K562 (cell line): ENCODE measurements at regions of chr1 and their contacts with region 1.

Region 1: GRCh38 chr1:26321315-26322041 is 3.7 kb downstream of the CD52 start:
- DNase-seq: peak; percentile 89 to 94 (median 90)
- ATAC-seq: peak; percentile 87
- H3K4me3 ChIP-seq: no peak overlapping the region
- H3K27ac ChIP-seq: no peak overlapping the region
- H3K4me1 ChIP-seq: peaks cover 39 to 52% of the 10 kb centered on the region in 2 experiments
- H3K27me3 ChIP-seq: no peaks in the 10 kb centered on the region
- CTCF ChIP-seq: peak; percentile 96 to 98 (median 97)
- EP300 ChIP-seq: peak; percentile 21; the same call in 1 of the 2 replicates
- POLR2A ChIP-seq: no peak
- RAD21 ChIP-seq: peak; percentile 99

Region 2: GRCh38 chr1:26111530-26112406 is 209.7 kb before region 1 on chr1 and contains the start of gene PDIK1L:
- CTCF ChIA-PET with region 1: interaction called, 7 read pairs
- POLR2A ChIA-PET with region 1: interaction called, 3 read pairs
- in situ Hi-C with region 1: no loop called
- intact Hi-C with region 1: loop called (anchors 5 kb)
- DNase-seq: peak; percentile 90 to 98 (median 94)
- ATAC-seq: peak; percentile 85
- H3K4me3 ChIP-seq: peak within 1 kb of the TSS; percentile 94
- H3K27ac ChIP-seq: peak within 1 kb of the TSS; percentile 92
- H3K4me1 ChIP-seq: peaks cover 13 to 29% of the 10 kb centered on the region in 2 experiments
- H3K27me3 ChIP-seq: no peaks in the 10 kb centered on the region
- CTCF ChIP-seq: 0 out of 6 replicates have a peak, but pooled peaks of 2 of the 3 experiments have one; percentile 4 to 10
- EP300 ChIP-seq: no peak; the same call in 1 of the 2 replicates
- POLR2A ChIP-seq: peak; percentile 84
- RAD21 ChIP-seq: peak in 1 of 2 experiments; percentile 14; a peak in 1 of 4 replicates
- polyA plus RNA-seq, gene PDIK1L: 14.7 to 21.5 TPM

Region 3: GRCh38 chr1:26279456-26280332 is 41.8 kb before region 1 on chr1 and contains the start of gene SH3BGRL3:
- CTCF ChIA-PET with region 1: interaction called, 31 read pairs
- POLR2A ChIA-PET with region 1: interaction called, 12 read pairs
- in situ Hi-C with region 1: no loop called
- intact Hi-C with region 1: loop called (anchors 1 kb)
- DNase-seq: peak; percentile 93 to 96 (median 96)
- ATAC-seq: peak; percentile 87
- H3K4me3 ChIP-seq: peak within 1 kb of the TSS; percentile 47
- H3K27ac ChIP-seq: peak within 1 kb of the TSS; percentile 81
- H3K4me1 ChIP-seq: peaks cover 81 to 83% of the 10 kb centered on the region in 2 experiments
- H3K27me3 ChIP-seq: no peaks in the 10 kb centered on the region
- CTCF ChIP-seq: peak; percentile 66 to 83 (median 69)
- EP300 ChIP-seq: peak; percentile 13; the same call in 1 of the 2 replicates
- POLR2A ChIP-seq: peak; percentile 84
- RAD21 ChIP-seq: peak; percentile 35 to 40; a peak in 2 of 4 replicates
- polyA plus RNA-seq, gene SH3BGRL3: 106 to 137 TPM

Region 4: DNA sequence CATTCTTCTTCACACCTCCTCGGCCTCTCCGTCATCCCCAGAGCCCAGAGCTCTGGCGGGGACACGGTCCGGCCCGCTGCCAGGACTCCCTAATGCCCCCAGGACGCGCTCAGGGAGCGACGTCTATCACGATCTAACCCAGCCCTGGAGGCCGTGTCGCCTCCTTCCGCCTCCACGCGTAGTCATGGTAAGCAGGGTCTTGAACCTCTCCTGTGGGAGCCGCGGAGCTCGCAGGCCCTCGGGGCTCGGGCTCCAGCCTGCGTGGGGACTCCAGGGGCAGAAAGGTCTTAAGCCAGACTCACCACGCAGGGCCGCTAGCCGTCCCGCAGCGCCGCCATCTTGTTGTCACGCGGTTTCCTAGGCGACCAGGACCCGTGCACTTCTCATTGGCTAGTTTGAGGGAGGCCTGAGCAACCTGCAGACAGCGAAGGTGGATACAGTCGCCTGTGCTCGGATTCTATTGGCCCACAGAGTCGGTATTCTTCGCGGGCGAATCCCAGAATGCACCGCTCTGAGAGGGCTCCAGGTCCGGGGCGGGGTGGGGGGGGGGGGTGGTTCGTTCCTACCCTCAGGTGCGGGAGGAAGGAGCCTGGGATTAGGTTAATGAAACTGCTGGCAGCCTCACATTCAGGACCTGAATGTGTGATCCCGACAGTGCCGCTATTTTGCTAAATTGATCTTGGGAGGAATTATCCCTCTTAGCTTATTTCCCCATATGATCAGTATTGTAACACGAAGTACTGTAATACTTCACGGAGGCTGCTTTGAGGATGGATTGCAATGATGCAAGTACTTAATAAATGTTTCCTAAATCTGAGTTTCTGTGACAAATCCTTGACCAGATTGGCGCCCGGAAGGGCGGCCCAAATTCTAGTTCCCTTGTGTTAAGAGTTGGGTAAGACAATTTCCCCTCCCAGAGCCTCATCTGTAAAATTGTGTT is 14.9 kb before region 1 on chr1 and contains the start of gene UBXN11:
- CTCF ChIA-PET with region 1: no interaction called
- POLR2A ChIA-PET with region 1: interaction called, 13 read pairs
- in situ Hi-C with region 1: no loop called
- intact Hi-C with region 1: no loop called
- DNase-seq: peak; percentile 99 to 100 (median 99)
- ATAC-seq: peak; percentile 99
- H3K4me3 ChIP-seq: peak within 1 kb of the TSS; percentile 77
- H3K27ac ChIP-seq: peak within 1 kb of the TSS; percentile 77
- H3K4me1 ChIP-seq: peaks cover 28 to 30% of the 10 kb centered on the region in 2 experiments
- H3K27me3 ChIP-seq: no peaks in the 10 kb centered on the region
- CTCF ChIP-seq: peak in 1 of 3 experiments; percentile 17; a peak in 1 of 6 replicates
- EP300 ChIP-seq: no peak
- POLR2A ChIP-seq: peak; percentile 76
- RAD21 ChIP-seq: no peak
- polyA plus RNA-seq, gene UBXN11: 0.48 to 2.1 TPM

Region 5: GRCh38 chr1:26391450-26391849 is 70.0 kb after region 1 on chr1:
- CTCF ChIA-PET with region 1: interaction called, 6 read pairs
- POLR2A ChIA-PET with region 1: interaction called, 4 read pairs
- in situ Hi-C with region 1: no loop called
- intact Hi-C with region 1: loop called (anchors 1 kb)
- DNase-seq: peak; percentile 71 to 84 (median 78)
- ATAC-seq: peak; percentile 89
- H3K4me3 ChIP-seq: no peak overlapping the region
- H3K27ac ChIP-seq: no peak overlapping the region
- H3K4me1 ChIP-seq: peaks cover 2 to 10% of the 10 kb centered on the region in 2 experiments
- H3K27me3 ChIP-seq: no peaks in the 10 kb centered on the region
- CTCF ChIP-seq: peak; percentile 91 to 99 (median 98)
- EP300 ChIP-seq: 0 out of 2 replicates have a peak, but pooled peaks have one; percentile 4
- POLR2A ChIP-seq: no peak
- RAD21 ChIP-seq: peak; percentile 97 to 100